Naive thymus-derived CD4-positive, alpha-beta T cell (primary cell): ENCODE measurements at regions of chr13 and their contacts with region 1.

Region 1: GRCh38 chr13:44577236-44578066 is 1.3 kb upstream of the TSC22D1 start:
- DNase-seq: peak; percentile 91 to 95 (median 94)
- ATAC-seq: peak; percentile 85
- H3K4me3 ChIP-seq: peak overlapping the region; percentile 66
- H3K4me3 Mint-ChIP-seq: peak overlapping the region; percentile 78 to 99 (median 93)
- H3K27ac ChIP-seq: peak overlapping the region; percentile 84
- H3K27ac Mint-ChIP-seq: peak overlapping the region; percentile 74 to 95 (median 93)
- H3K4me1 ChIP-seq: peaks cover 16 to 27% of the 10 kb centered on the region in 2 donors
- H3K4me1 Mint-ChIP-seq: peaks cover 31 to 40% (median 38%) of the 10 kb centered on the region in 7 donors
- H3K27me3 ChIP-seq: no peaks in the 10 kb centered on the region
- H3K27me3 Mint-ChIP-seq: peaks cover 0 to 56% (median 0%) of the 10 kb centered on the region in 5 donors

Region 2: GRCh38 chr13:44141725-44142539 is 435.5 kb before region 1 on chr13:
- CTCF ChIA-PET with region 1: no interaction called
- POLR2A ChIA-PET with region 1: no interaction called
- intact Hi-C with region 1: loop called (anchors 1 to 2 kb)
- DNase-seq: peak; percentile 81 to 99 (median 88)
- ATAC-seq: peak; percentile 99
- H3K4me3 ChIP-seq: peak overlapping the region; percentile 89
- H3K4me3 Mint-ChIP-seq: peak overlapping the region; percentile 84 to 97 (median 92)
- H3K27ac ChIP-seq: peak overlapping the region; percentile 82
- H3K27ac Mint-ChIP-seq: peak overlapping the region; percentile 76 to 98 (median 95)
- H3K4me1 ChIP-seq: peaks cover 5% of the 10 kb centered on the region in 2 donors
- H3K4me1 Mint-ChIP-seq: peaks cover 6 to 23% (median 17%) of the 10 kb centered on the region in 7 donors
- H3K27me3 ChIP-seq: peaks cover 0 to 3% of the 10 kb centered on the region in 2 donors
- H3K27me3 Mint-ChIP-seq: peaks cover 0 to 51% (median 7%) of the 10 kb centered on the region in 5 donors

Region 3: DNA sequence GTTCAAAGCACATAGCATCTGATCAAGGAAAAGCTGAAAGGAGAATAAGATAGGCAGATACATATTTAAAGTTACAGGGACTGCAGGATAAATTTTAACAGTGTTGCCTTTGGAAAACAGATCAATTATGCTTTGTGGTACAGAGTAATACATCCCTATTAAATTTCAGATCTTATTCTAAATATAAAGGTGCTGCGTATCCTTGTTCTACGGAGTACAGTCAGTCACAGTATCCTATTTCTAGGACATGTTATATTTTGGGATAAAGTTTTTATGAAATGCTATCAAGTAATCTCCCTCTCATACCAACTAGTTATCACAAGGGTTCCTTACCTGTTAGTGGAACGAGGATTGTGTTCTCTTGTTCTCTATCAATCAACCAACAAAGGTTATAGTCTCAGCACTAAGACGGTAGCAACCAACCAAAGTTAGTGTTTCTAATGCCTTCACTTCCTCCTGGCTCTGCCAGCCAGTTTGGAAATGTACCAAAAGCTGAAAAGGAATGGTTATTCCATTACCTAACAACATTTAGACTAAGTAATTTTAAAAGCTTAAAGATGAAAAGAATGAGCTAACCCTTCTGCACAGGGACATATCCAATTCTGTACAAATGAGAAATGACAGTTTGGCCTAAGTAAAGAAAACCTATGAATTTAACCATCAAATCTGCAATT is 36.6 kb before region 1 on chr13:
- CTCF ChIA-PET with region 1: no interaction called
- POLR2A ChIA-PET with region 1: no interaction called
- intact Hi-C with region 1: loop called in 1 of 2 experiments (anchors 2 kb)
- DNase-seq: no peak
- ATAC-seq: no peak
- H3K4me3 ChIP-seq: no peak overlapping the region
- H3K4me3 Mint-ChIP-seq: no peak overlapping the region
- H3K27ac ChIP-seq: no peak overlapping the region
- H3K27ac Mint-ChIP-seq: no peak overlapping the region
- H3K4me1 ChIP-seq: no peaks in the 10 kb centered on the region
- H3K4me1 Mint-ChIP-seq: peaks cover 0 to 24% (median 15%) of the 10 kb centered on the region in 7 donors
- H3K27me3 ChIP-seq: no peaks in the 10 kb centered on the region
- H3K27me3 Mint-ChIP-seq: peaks cover 0 to 3% (median 0%) of the 10 kb centered on the region in 5 donors

Region 4: DNA sequence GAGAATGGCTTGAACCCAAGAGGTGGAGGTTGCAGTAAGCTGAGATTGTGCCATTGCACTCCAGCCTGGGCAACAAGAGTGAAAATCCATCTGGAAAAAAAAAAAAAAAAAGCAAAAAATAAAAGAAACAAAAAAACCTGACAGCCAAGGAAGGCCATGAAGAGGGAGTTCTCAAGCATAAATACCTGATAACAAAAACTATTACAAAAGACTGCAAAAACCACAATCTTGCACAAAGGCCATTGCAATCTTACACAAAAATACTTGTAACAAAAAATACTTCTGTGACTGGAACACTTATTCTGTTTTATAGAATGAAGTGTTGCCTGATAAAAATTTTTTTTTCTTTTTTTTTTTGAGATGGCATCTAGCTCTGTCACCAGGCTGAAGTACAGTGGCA is 60.1 kb after region 1 on chr13:
- CTCF ChIA-PET with region 1: no interaction called
- POLR2A ChIA-PET with region 1: no interaction called
- intact Hi-C with region 1: no loop called
- DNase-seq: no peak
- ATAC-seq: no peak
- H3K4me3 ChIP-seq: no peak overlapping the region
- H3K4me3 Mint-ChIP-seq: no peak overlapping the region
- H3K27ac ChIP-seq: no peak overlapping the region
- H3K27ac Mint-ChIP-seq: no peak overlapping the region
- H3K4me1 ChIP-seq: no peaks in the 10 kb centered on the region
- H3K4me1 Mint-ChIP-seq: no peaks in the 10 kb centered on the region
- H3K27me3 ChIP-seq: no peaks in the 10 kb centered on the region
- H3K27me3 Mint-ChIP-seq: peaks cover 0 to 4% (median 0%) of the 10 kb centered on the region in 5 donors

Region 5: DNA sequence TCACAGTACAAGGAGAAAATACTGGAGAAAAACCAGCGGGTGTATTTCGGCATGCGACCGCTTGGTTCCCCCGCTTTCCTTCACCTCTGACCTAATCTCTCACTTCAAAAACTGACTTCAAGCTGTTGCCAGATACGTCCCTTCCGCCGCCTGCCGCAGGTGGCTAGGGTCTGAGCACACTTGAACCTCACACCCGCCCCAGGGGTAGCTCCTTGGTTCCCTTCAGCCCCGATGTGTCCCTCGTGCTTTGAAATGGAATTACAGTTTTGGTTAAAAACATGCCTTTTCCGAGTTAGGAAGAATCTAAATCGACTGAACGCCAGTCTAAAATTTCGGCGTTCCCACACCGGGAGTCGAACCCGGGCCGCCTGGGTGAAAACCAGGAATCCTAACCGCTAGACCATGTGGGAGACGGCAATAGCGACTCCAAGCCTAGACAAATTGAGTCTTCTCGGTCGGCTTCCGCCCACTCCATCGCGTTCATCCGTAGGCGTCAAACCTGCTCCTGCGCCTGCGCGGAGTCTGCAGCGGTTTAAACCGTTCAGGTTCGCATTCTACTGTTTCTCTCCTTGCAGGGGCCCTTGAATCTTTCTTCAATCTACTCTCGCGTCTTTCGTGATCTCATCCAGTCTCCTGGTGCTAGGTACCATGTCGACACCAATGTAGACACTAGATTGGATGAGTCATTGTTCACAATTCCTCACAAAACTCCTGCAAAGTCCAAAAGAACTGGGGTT is 340.3 kb after region 1 on chr13:
- CTCF ChIA-PET with region 1: no interaction called
- POLR2A ChIA-PET with region 1: interaction called, 5 read pairs
- intact Hi-C with region 1: loop called (anchors 1 kb)
- DNase-seq: peak; percentile 95 to 98 (median 97)
- ATAC-seq: peak; percentile 85
- H3K4me3 ChIP-seq: peak overlapping the region; percentile 89
- H3K4me3 Mint-ChIP-seq: no peak overlapping the region
- H3K27ac ChIP-seq: peak overlapping the region; percentile 75
- H3K27ac Mint-ChIP-seq: no peak overlapping the region
- H3K4me1 ChIP-seq: peaks cover 5 to 9% of the 10 kb centered on the region in 2 donors
- H3K4me1 Mint-ChIP-seq: peaks cover 2 to 19% (median 7%) of the 10 kb centered on the region in 7 donors
- H3K27me3 ChIP-seq: no peaks in the 10 kb centered on the region
- H3K27me3 Mint-ChIP-seq: peaks cover 0 to 4% (median 0%) of the 10 kb centered on the region in 5 donors

Region 6: DNA sequence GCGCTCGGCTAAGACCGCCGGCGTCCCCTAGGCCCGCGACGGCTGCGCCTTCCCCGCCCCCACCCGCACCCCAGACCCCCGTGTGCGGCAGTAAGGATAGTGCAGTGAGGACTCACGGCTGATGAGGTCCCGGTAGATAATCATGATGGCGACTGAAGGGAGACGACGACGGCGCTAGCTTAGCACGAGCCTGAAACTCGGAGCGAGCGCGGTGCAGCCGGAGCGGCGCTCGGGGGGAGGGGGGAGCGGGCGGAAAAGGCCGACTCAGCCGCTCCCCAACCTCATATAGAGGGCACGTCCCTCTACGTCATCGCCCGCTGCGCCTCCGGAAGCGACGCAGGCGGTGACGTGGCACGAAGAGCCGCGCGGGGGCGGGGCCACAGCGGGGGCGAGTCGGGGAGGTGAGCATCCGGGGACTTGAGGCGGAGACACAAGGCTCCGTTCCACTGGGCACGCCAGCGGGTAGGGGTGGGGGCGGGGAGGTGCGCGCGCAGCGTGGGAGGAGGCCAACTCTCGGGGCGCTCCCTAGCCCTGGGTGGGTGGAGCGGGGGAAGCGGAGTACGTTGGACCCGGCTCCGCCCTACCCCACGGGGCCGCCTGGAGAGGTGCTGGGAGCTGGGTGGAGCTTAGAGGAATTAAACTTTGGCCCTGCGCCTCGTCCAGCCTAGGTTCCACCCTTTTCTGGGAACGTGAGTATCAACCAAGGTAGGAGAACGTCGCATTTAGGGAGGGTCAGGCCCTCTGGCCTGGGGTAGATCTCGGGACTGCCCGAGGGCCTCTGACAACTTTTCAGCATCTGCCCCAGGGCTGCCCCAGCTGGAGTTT is 763.7 kb after region 1 on chr13 and contains the start of gene TPT1:
- CTCF ChIA-PET with region 1: no interaction called
- POLR2A ChIA-PET with region 1: no interaction called
- intact Hi-C with region 1: loop called (anchors 1 kb)
- DNase-seq: peak; percentile 99 to 100 (median 99)
- ATAC-seq: peak; percentile 91
- H3K4me3 ChIP-seq: peak within 1 kb of the TSS; percentile 94
- H3K4me3 Mint-ChIP-seq: peak within 1 kb of the TSS; percentile 95 to 100 (median 98)
- H3K27ac ChIP-seq: peak within 1 kb of the TSS; percentile 99
- H3K27ac Mint-ChIP-seq: peak within 1 kb of the TSS; percentile 92 to 100 (median 99)
- H3K4me1 ChIP-seq: peaks cover 35 to 43% of the 10 kb centered on the region in 2 donors
- H3K4me1 Mint-ChIP-seq: peaks cover 35 to 70% (median 57%) of the 10 kb centered on the region in 7 donors
- H3K27me3 ChIP-seq: no peaks in the 10 kb centered on the region
- H3K27me3 Mint-ChIP-seq: no peaks in the 10 kb centered on the region
- total RNA-seq, gene TPT1: 4,230 to 13,134 (median 7,796) TPM

Region 7: GRCh38 chr13:46211483-46212351 is 1634.3 kb after region 1 on chr13 and contains the start of gene LRRC63:
- CTCF ChIA-PET with region 1: no interaction called
- POLR2A ChIA-PET with region 1: no interaction called
- intact Hi-C with region 1: loop called in 1 of 2 experiments (anchors 2 kb)
- DNase-seq: peak; percentile 69 to 88 (median 80)
- ATAC-seq: peak; percentile 98
- H3K4me3 ChIP-seq: peak within 1 kb of the TSS; percentile 81
- H3K4me3 Mint-ChIP-seq: peak within 1 kb of the TSS; percentile 83 to 100 (median 93)
- H3K27ac ChIP-seq: peak within 1 kb of the TSS; percentile 88
- H3K27ac Mint-ChIP-seq: peak within 1 kb of the TSS; percentile 91 to 98 (median 94)
- H3K4me1 ChIP-seq: peaks cover 5 to 8% of the 10 kb centered on the region in 2 donors
- H3K4me1 Mint-ChIP-seq: peaks cover 7 to 37% (median 26%) of the 10 kb centered on the region in 7 donors
- H3K27me3 ChIP-seq: no peaks in the 10 kb centered on the region
- H3K27me3 Mint-ChIP-seq: peaks cover 0 to 6% (median 0%) of the 10 kb centered on the region in 5 donors
- total RNA-seq, gene LRRC63: 0.19 to 0.80 (median 0.49) TPM